ENCODE measurements at regions of chr6 and their contacts with region 1.

Region 1: GRCh38 chr6:115896538-115897129 is 164.1 kb downstream of the FRK start:
- DNase-seq: peak; percentile 54
- H3K4me3 Mint-ChIP-seq: no peak overlapping the region
- H3K27ac Mint-ChIP-seq: no peak overlapping the region
- H3K4me1 Mint-ChIP-seq: no peaks in the 10 kb centered on the region
- H3K27me3 Mint-ChIP-seq: peaks cover 56% of the 10 kb centered on the region
- CTCF ChIP-seq: peak; percentile 80

Region 2: GRCh38 chr6:114747987-114748630 is 1148.5 kb before region 1 on chr6:
- CTCF ChIA-PET with region 1: interaction called, 9 read pairs
- POLR2A ChIA-PET with region 1: no interaction called
- intact Hi-C with region 1: loop called (anchors 1 kb)
- DNase-seq: peak; percentile 63
- H3K4me3 Mint-ChIP-seq: no peak overlapping the region
- H3K27ac Mint-ChIP-seq: no peak overlapping the region
- H3K4me1 Mint-ChIP-seq: no peaks in the 10 kb centered on the region
- H3K27me3 Mint-ChIP-seq: peaks cover 40% of the 10 kb centered on the region
- CTCF ChIP-seq: peak; percentile 76

Region 3: DNA sequence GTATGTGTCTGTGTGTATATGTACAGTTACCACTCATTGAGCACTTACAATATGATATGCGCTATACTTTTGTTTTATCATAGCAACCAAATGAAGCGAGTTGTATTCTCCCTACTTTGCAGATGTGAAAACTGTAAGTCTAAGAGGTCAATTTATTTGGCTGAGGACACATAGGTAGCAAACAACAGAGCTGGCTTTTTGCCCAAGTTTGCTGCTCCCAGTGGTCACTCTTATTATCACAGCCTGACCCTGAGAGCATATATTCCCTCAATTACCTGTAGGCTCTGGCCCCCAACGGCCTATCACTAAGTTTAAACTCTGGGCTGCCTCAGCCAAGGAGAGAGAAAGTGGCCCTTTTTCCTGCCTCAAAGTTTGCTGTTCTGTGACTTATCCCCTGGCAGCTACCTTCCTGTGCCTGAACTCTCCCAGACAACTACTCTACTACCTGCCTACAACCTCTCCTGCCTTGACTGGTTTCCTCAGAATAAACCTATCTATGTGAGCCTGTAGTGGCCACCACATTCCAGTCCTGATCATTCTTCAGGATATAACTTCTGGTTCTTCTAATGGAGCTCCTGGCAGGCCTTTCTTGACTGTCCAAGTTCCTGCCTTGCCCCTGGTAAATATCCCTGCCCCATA is 57.8 kb before region 1 on chr6:
- CTCF ChIA-PET with region 1: no interaction called
- POLR2A ChIA-PET with region 1: no interaction called
- intact Hi-C with region 1: no loop called
- DNase-seq: peak; percentile 73
- H3K4me3 Mint-ChIP-seq: no peak overlapping the region
- H3K27ac Mint-ChIP-seq: no peak overlapping the region
- H3K4me1 Mint-ChIP-seq: no peaks in the 10 kb centered on the region
- H3K27me3 Mint-ChIP-seq: peaks cover 33% of the 10 kb centered on the region
- CTCF ChIP-seq: peak; percentile 62

Region 4: DNA sequence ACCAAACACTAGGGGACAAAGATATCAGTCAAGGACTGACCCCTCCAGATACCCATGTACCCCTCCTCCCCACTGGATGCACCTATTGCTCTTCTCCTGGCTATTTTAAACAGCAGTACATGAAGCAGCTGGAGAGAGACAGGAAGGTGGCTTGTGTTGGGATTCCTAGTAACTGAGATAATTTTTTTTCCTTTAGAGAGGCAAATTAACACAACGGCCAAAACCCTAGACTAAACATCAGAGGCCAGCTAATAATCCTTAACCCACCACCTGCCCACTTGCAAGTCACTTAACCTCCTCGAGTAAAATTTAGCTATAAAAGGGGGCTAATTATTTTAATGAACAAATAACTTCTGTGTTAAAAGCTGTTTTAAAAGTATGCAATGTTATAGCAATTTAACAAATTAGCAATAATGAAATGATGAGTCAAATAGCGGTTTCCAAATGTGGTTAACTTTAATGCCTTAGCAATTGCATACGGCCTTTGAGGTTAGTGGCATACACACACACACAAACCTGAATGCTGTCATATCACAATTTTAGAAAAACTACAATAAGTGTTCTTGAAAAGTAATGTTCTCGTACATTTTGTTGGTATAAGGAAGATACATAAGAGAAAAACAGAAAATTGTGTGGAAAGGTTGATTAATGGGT is 12.4 kb after region 1 on chr6:
- CTCF ChIA-PET with region 1: interaction called, 19 read pairs
- POLR2A ChIA-PET with region 1: no interaction called
- intact Hi-C with region 1: no loop called
- DNase-seq: no peak
- H3K4me3 Mint-ChIP-seq: no peak overlapping the region
- H3K27ac Mint-ChIP-seq: no peak overlapping the region
- H3K4me1 Mint-ChIP-seq: peaks cover 6% of the 10 kb centered on the region
- H3K27me3 Mint-ChIP-seq: peaks cover 38% of the 10 kb centered on the region
- CTCF ChIP-seq: no peak